ENCODE measurements at regions of chr16 and their contacts with region 1.

Region 1: DNA sequence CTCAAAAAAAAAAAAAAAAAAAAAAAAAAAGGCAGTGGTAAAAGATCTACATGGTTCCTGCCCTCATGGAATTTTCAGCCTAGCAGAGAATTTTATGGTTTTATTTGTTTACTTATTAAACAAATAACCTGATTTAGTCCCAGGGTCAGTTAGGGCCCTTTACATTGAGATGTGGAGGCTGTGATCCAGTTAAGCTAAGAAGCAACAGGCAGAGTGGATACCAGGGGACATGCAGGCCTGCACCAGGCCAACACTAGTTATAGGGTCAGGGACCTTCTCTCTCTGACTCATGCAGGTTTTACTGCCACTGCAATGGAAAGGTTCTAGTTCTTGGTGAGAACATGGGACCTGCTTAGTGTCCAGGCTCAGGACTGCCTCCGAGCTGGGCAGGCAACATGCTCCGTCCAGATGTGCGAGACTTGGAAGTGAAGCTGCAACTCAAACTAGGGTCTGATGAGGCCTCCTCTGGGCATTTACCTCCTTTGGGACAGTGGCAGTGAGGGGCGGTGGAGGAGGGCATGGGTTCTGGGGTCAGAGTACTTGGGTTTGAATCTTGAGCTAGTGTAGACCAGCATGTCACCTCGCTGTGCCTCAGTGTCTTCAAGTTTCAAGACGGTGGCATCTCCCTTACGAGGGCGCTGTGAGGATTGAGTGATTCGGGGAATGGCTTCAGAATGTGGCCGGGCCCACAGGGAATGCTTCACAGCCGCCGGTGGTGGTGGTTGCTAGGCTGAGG is 301.8 kb downstream of the CPPED1 start:
- DNase-seq: no peak
- H3K4me3 Mint-ChIP-seq: no peak overlapping the region
- H3K27ac Mint-ChIP-seq: no peak overlapping the region
- H3K4me1 Mint-ChIP-seq: peaks cover 10% of the 10 kb centered on the region
- H3K27me3 Mint-ChIP-seq: no peaks in the 10 kb centered on the region
- CTCF ChIP-seq: no peak

Region 2: GRCh38 chr16:12386192-12386591 is 115.7 kb before region 1 on chr16:
- CTCF ChIA-PET with region 1: no interaction called
- intact Hi-C with region 1: no loop called
- DNase-seq: no peak
- H3K4me3 Mint-ChIP-seq: no peak overlapping the region
- H3K27ac Mint-ChIP-seq: no peak overlapping the region
- H3K4me1 Mint-ChIP-seq: peaks cover under 1% of the 10 kb centered on the region
- H3K27me3 Mint-ChIP-seq: no peaks in the 10 kb centered on the region
- CTCF ChIP-seq: no peak

Region 3: DNA sequence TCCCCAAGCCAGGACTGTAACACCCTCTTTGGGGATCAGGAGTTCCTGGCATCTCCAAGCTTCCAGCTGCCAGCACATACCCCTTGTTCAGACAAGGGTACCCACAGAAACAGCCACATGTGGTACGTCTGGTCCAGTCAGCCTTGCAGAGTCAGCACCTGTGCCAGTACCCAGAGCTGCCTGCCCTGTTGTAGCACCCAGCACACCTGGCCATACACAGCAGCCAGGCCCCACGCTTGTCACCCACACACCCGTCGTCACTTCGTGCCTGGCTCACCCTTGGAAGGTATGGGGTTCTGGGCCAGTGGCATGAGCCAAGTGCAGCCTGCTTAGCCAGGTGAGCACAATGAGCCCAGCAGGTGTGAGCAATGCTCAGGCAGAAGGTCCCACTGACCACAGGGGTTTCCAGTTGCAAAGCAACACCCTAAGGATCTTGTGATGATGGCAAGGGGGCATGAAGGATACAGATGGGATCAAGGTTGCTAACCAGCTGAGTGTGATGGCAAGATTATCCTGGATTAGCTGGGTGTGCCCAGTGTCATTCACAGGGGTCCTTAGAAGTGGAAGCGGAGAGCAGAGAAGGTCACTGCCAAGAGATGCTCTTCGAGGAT is 99.5 kb after region 1 on chr16:
- CTCF ChIA-PET with region 1: no interaction called
- intact Hi-C with region 1: no loop called
- DNase-seq: no peak
- H3K4me3 Mint-ChIP-seq: no peak overlapping the region
- H3K27ac Mint-ChIP-seq: no peak overlapping the region
- H3K4me1 Mint-ChIP-seq: no peaks in the 10 kb centered on the region
- H3K27me3 Mint-ChIP-seq: no peaks in the 10 kb centered on the region
- CTCF ChIP-seq: no peak

Region 4: DNA sequence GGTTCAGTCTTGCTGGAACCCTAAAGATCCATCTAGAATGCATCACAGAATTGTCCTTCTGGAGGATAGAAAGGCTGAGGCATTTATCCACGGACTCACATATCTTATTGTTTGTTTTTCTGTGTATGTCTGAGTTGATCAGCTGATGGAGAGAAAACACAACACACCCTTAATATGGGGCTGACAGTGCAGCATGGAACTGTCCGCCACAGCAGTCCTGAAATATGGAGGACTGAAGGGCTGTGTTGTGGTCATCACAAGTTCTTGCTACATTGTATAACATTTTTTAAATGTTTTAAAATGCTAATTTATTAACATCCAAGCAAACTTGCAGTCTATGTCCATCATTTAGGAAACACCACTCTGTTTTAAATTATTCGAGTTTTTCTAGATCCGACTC is 969.1 kb after region 1 on chr16:
- CTCF ChIA-PET with region 1: no interaction called
- intact Hi-C with region 1: no loop called
- DNase-seq: no peak
- H3K4me3 Mint-ChIP-seq: no peak overlapping the region
- H3K27ac Mint-ChIP-seq: no peak overlapping the region
- H3K4me1 Mint-ChIP-seq: no peaks in the 10 kb centered on the region
- H3K27me3 Mint-ChIP-seq: no peaks in the 10 kb centered on the region
- CTCF ChIP-seq: no peak

Region 5: GRCh38 chr16:14321542-14321941 is 1819.7 kb after region 1 on chr16:
- CTCF ChIA-PET with region 1: interaction called, 11 read pairs
- intact Hi-C with region 1: no loop called
- DNase-seq: no peak
- H3K4me3 Mint-ChIP-seq: no peak overlapping the region
- H3K27ac Mint-ChIP-seq: no peak overlapping the region
- H3K4me1 Mint-ChIP-seq: no peaks in the 10 kb centered on the region
- H3K27me3 Mint-ChIP-seq: no peaks in the 10 kb centered on the region
- CTCF ChIP-seq: no peak